Activated CD8-positive, alpha-beta T cell treated with anti-CD3 and anti-CD28 coated beads, Interleukin-2, amount 10 ng/mL, durations not matched to agents 7 days and 5 days (primary cell): ENCODE measurements at regions of chr4 and their contacts with region 1.

Region 1: GRCh38 chr4:81903212-81903611 is 431.5 kb upstream of the RASGEF1B start:
- DNase-seq: no peak
- ATAC-seq: no peak
- H3K4me3 Mint-ChIP-seq: no peak overlapping the region
- H3K27ac Mint-ChIP-seq: no peak overlapping the region
- H3K4me1 Mint-ChIP-seq: peaks cover 13% of the 10 kb centered on the region
- H3K27me3 Mint-ChIP-seq: peaks cover 3% of the 10 kb centered on the region

Region 2: GRCh38 chr4:81736324-81736723 is 166.9 kb before region 1 on chr4:
- CTCF ChIA-PET with region 1: no interaction called
- POLR2A ChIA-PET with region 1: no interaction called
- DNase-seq: no peak
- ATAC-seq: no peak
- H3K4me3 Mint-ChIP-seq: no peak overlapping the region
- H3K27ac Mint-ChIP-seq: no peak overlapping the region
- H3K4me1 Mint-ChIP-seq: no peaks in the 10 kb centered on the region
- H3K27me3 Mint-ChIP-seq: no peaks in the 10 kb centered on the region

Region 3: GRCh38 chr4:81891005-81891996 is 11.9 kb before region 1 on chr4:
- CTCF ChIA-PET with region 1: no interaction called
- POLR2A ChIA-PET with region 1: no interaction called
- DNase-seq: no peak
- ATAC-seq: no peak
- H3K4me3 Mint-ChIP-seq: no peak overlapping the region
- H3K27ac Mint-ChIP-seq: no peak overlapping the region
- H3K4me1 Mint-ChIP-seq: no peaks in the 10 kb centered on the region
- H3K27me3 Mint-ChIP-seq: peaks cover 11% of the 10 kb centered on the region

Region 4: GRCh38 chr4:81913427-81913879 is 10.2 kb after region 1 on chr4:
- CTCF ChIA-PET with region 1: interaction called, 12 read pairs
- POLR2A ChIA-PET with region 1: no interaction called
- DNase-seq: peak; percentile 71
- ATAC-seq: peak; percentile 57
- H3K4me3 Mint-ChIP-seq: no peak overlapping the region
- H3K27ac Mint-ChIP-seq: no peak overlapping the region
- H3K4me1 Mint-ChIP-seq: peaks cover 5% of the 10 kb centered on the region
- H3K27me3 Mint-ChIP-seq: peaks cover 13% of the 10 kb centered on the region

Region 5: GRCh38 chr4:81930506-81931238 is 27.5 kb after region 1 on chr4:
- CTCF ChIA-PET with region 1: no interaction called
- POLR2A ChIA-PET with region 1: no interaction called
- DNase-seq: no peak
- ATAC-seq: no peak
- H3K4me3 Mint-ChIP-seq: no peak overlapping the region
- H3K27ac Mint-ChIP-seq: no peak overlapping the region
- H3K4me1 Mint-ChIP-seq: no peaks in the 10 kb centered on the region
- H3K27me3 Mint-ChIP-seq: peaks cover 2% of the 10 kb centered on the region